HEK293 (cell line): ENCODE measurements at regions of chr1 and their contacts with region 1.

Region 1: GRCh38 chr1:197614916-197615692 is 160.2 kb downstream of the DENND1B start:
- H3K4me3 ChIP-seq: no peak overlapping the region
- H3K27ac ChIP-seq: no peak overlapping the region
- H3K4me1 ChIP-seq: no peaks in the 10 kb centered on the region
- CTCF ChIP-seq: peak; percentile 56; the same call in 1 of the 2 replicates

Region 2: GRCh38 chr1:197868751-197869489 is 253.8 kb after region 1 on chr1:
- CTCF ChIA-PET with region 1: interaction called, 42 read pairs
- POLR2A ChIA-PET with region 1: no interaction called
- H3K4me3 ChIP-seq: no peak overlapping the region
- H3K27ac ChIP-seq: no peak overlapping the region
- H3K4me1 ChIP-seq: no peaks in the 10 kb centered on the region
- CTCF ChIP-seq: no peak

Region 3: GRCh38 chr1:197924516-197925123 is 309.5 kb after region 1 on chr1:
- CTCF ChIA-PET with region 1: interaction called, 20 read pairs
- POLR2A ChIA-PET with region 1: no interaction called
- H3K4me3 ChIP-seq: no peak overlapping the region
- H3K27ac ChIP-seq: no peak overlapping the region
- H3K4me1 ChIP-seq: no peaks in the 10 kb centered on the region
- CTCF ChIP-seq: peak; percentile 46